ENCODE measurements at regions of chr12 and their contacts with region 1.

Region 1: GRCh38 chr12:119667577-119668323 is at the start of gene PRKAB1:
- DNase-seq: peak; percentile 98
- H3K4me3 Mint-ChIP-seq: peak within 1 kb of the TSS; percentile 91
- H3K27ac Mint-ChIP-seq: peak within 1 kb of the TSS; percentile 93
- H3K4me1 Mint-ChIP-seq: peaks cover 56% of the 10 kb centered on the region
- H3K27me3 Mint-ChIP-seq: no peaks in the 10 kb centered on the region
- total RNA-seq, gene PRKAB1: 37.5 to 39.8 TPM

Region 2: GRCh38 chr12:119444456-119445044 is 223.2 kb before region 1 on chr12:
- CTCF ChIA-PET with region 1: interaction called, 10 read pairs
- POLR2A ChIA-PET with region 1: no interaction called
- DNase-seq: peak; percentile 57
- H3K4me3 Mint-ChIP-seq: no peak overlapping the region
- H3K27ac Mint-ChIP-seq: no peak overlapping the region
- H3K4me1 Mint-ChIP-seq: no peaks in the 10 kb centered on the region
- H3K27me3 Mint-ChIP-seq: peaks cover 2% of the 10 kb centered on the region

Region 3: DNA sequence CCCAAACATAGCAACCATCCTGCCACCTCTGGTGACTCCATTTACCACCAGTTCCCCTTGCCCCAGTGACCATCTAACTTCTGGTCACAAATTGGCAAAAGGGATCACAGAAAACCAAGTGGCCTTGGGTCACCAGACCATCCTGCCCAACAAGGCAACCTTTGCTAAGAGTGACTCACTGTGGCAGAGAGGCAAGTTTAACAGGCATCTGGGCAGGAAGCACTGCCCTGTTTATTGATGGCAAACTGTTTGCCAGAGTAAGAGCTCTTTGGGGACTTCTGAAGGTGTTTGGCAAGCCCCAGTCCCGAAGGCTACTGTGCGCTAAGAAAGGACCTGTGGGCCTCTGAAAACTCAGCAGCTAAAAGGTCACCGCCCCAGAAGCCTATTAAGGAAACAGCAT is 102.3 kb before region 1 on chr12:
- CTCF ChIA-PET with region 1: no interaction called
- POLR2A ChIA-PET with region 1: no interaction called
- DNase-seq: no peak
- H3K4me3 Mint-ChIP-seq: no peak overlapping the region
- H3K27ac Mint-ChIP-seq: no peak overlapping the region
- H3K4me1 Mint-ChIP-seq: no peaks in the 10 kb centered on the region
- H3K27me3 Mint-ChIP-seq: no peaks in the 10 kb centered on the region

Region 4: DNA sequence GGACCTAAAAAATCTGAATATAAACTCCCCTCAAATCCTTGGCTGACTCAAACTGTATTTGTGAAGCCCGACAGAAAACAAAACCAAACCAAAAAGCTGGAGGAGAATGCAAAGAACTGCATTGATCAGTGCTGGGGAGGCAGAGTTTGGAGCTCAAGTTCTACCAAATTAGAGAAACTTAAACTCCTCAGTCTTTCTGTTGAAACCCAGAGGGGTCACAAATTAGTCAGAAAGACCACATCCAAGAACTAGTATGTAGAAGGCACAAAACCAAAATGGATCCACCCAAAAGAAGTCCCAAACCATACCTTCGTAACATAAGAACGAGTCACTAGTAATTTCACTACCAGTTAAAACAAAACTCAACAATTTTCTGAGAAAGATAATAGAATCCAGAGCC is 15.1 kb before region 1 on chr12:
- CTCF ChIA-PET with region 1: interaction called, 19 read pairs
- POLR2A ChIA-PET with region 1: interaction called, 9 read pairs
- DNase-seq: no peak
- H3K4me3 Mint-ChIP-seq: no peak overlapping the region
- H3K27ac Mint-ChIP-seq: no peak overlapping the region
- H3K4me1 Mint-ChIP-seq: no peaks in the 10 kb centered on the region
- H3K27me3 Mint-ChIP-seq: peaks cover 7% of the 10 kb centered on the region

Region 5: GRCh38 chr12:119681961-119682638 is 14.3 kb after region 1 on chr12:
- CTCF ChIA-PET with region 1: interaction called, 28 read pairs
- POLR2A ChIA-PET with region 1: interaction called, 26 read pairs
- DNase-seq: no peak
- H3K4me3 Mint-ChIP-seq: no peak overlapping the region
- H3K27ac Mint-ChIP-seq: peak overlapping the region; percentile 77
- H3K4me1 Mint-ChIP-seq: peaks cover 23% of the 10 kb centered on the region
- H3K27me3 Mint-ChIP-seq: no peaks in the 10 kb centered on the region

Region 6: GRCh38 chr12:119758722-119759121 is 91.0 kb after region 1 on chr12:
- CTCF ChIA-PET with region 1: no interaction called
- POLR2A ChIA-PET with region 1: no interaction called
- DNase-seq: no peak
- H3K4me3 Mint-ChIP-seq: no peak overlapping the region
- H3K27ac Mint-ChIP-seq: no peak overlapping the region
- H3K4me1 Mint-ChIP-seq: no peaks in the 10 kb centered on the region
- H3K27me3 Mint-ChIP-seq: no peaks in the 10 kb centered on the region

Measured in activated CD4-positive, alpha-beta memory T cell treated with anti-CD3 and anti-CD28 coated beads, Interleukin-2, amount 10 ng/mL, durations not matched to agents 7 days and 5 days (primary cell).